Sciatic nerve (tissue), 2 donors: ENCODE measurements at regions of chr16 and their contacts with region 1.

Region 1: DNA sequence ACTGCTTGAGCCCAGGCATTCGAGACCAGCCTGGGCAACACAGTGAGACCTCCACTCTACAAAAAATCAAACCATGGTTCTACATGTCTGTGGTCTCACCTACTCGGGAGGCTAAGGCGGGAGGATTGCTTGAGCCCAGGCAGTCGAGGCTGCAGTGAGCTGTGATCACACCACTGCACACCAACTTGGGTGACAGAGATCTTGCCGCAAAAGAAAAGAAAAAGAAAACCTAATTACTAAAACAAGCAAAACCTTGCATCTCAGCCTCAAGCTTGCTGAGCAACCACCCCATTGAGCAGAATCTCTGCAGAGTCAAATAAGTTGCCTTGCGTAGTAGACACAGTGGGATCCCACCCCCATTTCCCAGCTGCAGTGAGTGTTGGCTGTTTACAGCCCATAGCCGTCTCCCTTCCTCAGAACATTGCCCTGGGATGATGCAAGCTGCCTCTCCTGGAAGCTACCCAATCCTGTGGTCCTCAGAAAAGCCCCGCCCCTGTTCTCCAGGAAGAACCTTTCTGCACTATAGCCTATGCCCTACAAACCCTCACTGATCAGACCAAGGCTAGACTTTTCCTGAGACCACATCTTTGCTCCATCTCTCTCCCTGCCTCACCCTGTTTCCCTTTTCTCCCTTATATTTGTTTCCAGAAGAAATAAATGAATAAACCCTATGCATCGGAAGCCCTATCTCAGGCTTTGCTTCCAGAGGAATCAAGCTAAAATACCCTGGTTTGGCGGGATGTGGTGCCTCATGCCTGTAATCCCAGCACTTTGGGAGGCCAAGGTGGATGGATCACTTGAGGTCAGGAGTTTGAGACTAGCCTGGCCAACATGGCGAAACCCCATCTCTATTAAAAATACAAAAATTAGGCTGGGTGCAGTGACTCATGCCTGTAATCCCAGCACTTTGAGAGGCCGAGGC is 16.7 kb upstream of the ERN2 start:
- DNase-seq: no peak
- ATAC-seq: peak; percentile 28

Region 2: DNA sequence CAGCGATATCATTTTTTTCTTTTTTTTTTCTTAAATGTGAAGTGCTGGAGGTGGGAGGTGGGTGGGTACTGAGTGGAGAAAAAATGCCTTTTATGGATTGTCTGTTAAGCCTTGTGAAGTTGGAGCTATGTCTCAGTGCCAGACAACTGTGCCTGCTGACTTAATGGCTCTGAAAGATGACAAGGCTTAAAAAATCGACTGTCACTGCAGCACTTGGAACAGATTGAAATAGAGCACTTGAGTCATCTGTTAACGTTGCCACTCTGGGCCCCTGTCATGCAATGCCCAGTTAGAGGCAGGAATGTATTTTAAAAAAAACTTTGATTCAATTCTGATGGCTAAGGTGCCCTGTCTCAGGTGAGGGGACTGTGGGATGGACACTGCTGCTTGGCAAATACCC is 1024.0 kb before region 1 on chr16:
- intact Hi-C with region 1: no loop called
- DNase-seq: no peak
- ATAC-seq: no peak

Region 3: DNA sequence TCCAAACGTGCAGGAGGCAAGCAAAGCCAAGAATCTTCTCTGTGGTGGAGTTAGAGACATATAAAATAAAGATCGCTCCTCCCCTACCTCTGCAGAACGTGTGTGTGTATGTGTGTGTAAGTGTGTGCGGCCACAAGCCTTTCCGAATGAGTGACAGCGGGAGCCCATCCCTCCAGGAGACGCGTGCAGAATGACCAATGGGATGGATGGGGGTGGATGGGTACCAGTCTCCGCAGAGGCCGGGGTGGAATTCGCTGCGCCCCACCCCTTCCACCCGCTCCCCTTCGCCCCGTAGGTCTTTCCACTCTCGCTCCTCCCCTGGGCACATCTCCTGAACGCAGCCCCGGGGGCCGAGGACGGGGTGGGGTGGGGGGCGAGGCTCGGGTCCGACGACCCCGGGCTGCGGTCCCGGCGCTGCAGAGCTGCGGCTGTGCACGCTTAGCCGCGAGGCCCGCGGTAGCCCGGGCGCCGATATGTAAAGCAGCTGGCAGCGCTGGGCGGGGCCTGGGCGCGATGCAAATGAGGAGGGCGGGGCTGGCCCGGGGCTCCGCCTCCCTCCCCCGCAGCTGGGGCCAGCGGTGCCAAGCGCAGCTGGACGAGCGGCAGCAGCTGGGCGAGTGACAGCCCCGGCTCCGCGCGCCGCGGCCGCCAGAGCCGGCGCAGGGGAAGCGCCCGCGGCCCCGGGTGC is 105.8 kb after region 1 on chr16 and contains the start of gene PRKCB:
- intact Hi-C with region 1: loop called (anchors 10 kb)
- DNase-seq: peak; percentile 80
- ATAC-seq: peak; percentile 91
- total RNA-seq, gene PRKCB: 12.7 TPM

Region 4: DNA sequence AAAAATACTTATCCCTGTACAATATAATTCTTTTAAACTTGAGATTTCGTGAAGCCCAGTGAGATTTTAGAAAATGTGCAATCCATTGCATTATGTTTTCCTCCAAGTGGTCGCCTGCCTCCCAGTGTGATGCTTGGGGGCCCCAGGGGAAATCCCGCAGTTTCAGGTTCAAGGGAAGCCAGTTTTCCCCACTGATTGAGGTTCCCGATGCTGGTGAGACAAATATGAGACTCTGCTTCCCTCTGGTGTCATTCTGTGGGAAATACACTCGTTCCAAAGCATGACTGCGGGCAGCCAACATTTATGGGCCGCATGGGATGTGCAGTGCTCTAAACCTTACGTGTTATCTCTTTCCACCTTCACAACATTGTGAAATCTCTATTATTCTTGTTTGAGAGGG is 306.9 kb after region 1 on chr16:
- intact Hi-C with region 1: loop called (anchors 5 kb)
- DNase-seq: no peak
- ATAC-seq: no peak

Region 5: GRCh38 chr16:24504472-24505345 is 774.9 kb after region 1 on chr16:
- intact Hi-C with region 1: loop called (anchors 10 kb)
- DNase-seq: peak; percentile 61
- ATAC-seq: peak; percentile 86